ENCODE measurements at regions of chr4 and their contacts with region 1.

Region 1: DNA sequence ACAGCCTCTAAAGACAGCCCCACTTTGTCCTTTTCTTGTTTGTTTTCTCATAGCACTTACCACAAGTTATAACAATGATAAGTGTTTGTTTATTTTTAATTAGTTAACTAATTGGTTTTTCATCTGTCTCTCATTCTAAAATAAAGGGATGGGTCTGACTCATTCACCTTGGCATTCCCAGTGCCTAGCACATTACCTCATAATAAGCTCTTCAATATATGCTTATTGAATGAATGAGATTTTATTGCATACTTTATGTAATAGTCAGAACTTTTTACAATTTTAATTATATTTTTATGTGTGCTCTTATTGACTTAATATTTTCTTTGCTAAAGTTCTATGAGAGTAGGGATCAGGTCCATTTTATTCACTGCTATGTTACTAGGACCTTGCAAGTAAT is 22.8 kb upstream of the PRKG2 start:
- DNase-seq: peak; percentile 54
- ATAC-seq: peak; percentile 89
- H3K4me3 ChIP-seq: no peak overlapping the region
- H3K27ac ChIP-seq: peak overlapping the region; percentile 34
- H3K4me1 ChIP-seq: peaks cover 8% of the 10 kb centered on the region
- H3K27me3 ChIP-seq: no peaks in the 10 kb centered on the region
- CTCF ChIP-seq: no peak

Region 2: DNA sequence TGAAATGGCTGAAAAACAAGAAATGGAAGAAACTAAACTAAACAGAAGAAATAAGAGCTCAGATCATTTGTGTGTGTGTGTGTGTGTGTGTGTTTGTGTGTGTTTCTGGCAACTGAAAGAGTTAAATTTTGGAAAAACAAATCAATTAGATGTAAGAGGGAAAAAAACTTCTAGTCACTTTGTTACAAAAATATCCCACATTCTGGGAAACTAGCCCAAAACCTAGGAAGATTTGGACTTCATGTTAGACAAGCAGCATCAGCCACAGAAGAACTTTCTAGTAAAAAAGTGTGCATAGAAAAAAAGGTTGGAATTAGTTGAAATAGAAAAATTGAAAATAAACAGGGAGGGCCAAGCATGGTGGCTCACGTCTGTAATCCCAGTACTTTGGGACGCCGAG is 88.8 kb after region 1 on chr4:
- CTCF ChIA-PET with region 1: no interaction called
- POLR2A ChIA-PET with region 1: no interaction called
- intact Hi-C with region 1: loop called (anchors 2 kb)
- DNase-seq: no peak
- ATAC-seq: no peak
- H3K4me3 ChIP-seq: no peak overlapping the region
- H3K27ac ChIP-seq: no peak overlapping the region
- H3K4me1 ChIP-seq: no peaks in the 10 kb centered on the region
- H3K27me3 ChIP-seq: no peaks in the 10 kb centered on the region
- CTCF ChIP-seq: no peak

Measured in PC-3 (cell line).